ENCODE measurements at regions of chrX and their contacts with region 1.

Region 1: GRCh38 chrX:153494541-153495361 is at the start of gene BGN:
- DNase-seq: peak; percentile 92
- total RNA-seq, gene BGN: 392 to 743 TPM

Region 2: GRCh38 chrX:153460845-153461244 is 33.9 kb before region 1 on chrX:
- intact Hi-C with region 1: no loop called
- DNase-seq: no peak

Region 3: GRCh38 chrX:153539979-153540358 is 45.2 kb after region 1 on chrX:
- intact Hi-C with region 1: loop called in 1 of 2 experiments (anchors 1 kb)
- DNase-seq: no peak